A673 (cell line): ENCODE measurements at regions of chr1 and their contacts with region 1.

Region 1: DNA sequence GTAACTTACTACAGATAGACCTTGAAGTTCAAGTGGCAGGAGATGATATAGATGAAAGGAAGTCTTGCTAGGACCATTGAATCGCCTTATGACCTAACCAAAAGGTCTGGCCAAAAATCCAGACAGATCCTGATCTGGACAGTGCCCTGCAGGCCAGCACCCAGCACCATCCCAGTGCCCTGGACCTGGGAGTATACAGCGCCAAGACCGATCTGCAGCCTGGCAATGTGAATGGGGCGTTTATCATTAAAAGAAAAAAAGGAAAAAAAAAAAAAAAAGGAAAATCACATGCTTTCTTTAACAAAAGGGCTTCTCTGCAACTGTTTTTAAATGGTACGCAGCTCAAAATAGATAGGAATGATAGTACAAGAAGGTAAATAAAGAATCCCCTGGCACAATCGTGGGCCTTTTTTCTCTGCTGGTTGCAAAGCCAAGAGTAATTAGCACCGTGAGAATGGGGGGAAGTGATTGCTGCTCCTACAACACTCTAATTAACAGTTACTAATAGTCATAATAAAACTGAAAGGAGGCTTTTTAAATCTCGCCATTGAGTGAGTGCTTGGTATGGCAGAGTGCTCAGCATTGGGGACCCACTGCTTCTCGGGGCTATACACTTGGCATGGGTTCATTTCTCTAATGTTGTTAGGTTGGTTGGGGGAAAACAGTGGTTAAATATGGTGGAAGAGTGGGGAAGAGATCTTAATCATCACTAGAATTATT is 146.7 kb downstream of the KAZN start:
- DNase-seq: no peak
- H3K4me3 ChIP-seq: no peak overlapping the region
- H3K27ac ChIP-seq: no peak overlapping the region
- H3K4me1 ChIP-seq: peaks cover 16% of the 10 kb centered on the region
- H3K27me3 ChIP-seq: no peaks in the 10 kb centered on the region
- CTCF ChIP-seq: no peak

Region 2: GRCh38 chr1:14761291-14762153 is 16.4 kb after region 1 on chr1:
- CTCF ChIA-PET with region 1: interaction called, 10 read pairs
- POLR2A ChIA-PET with region 1: no interaction called
- intact Hi-C with region 1: no loop called
- DNase-seq: no peak
- H3K4me3 ChIP-seq: no peak overlapping the region
- H3K27ac ChIP-seq: no peak overlapping the region
- H3K4me1 ChIP-seq: no peaks in the 10 kb centered on the region
- H3K27me3 ChIP-seq: no peaks in the 10 kb centered on the region
- CTCF ChIP-seq: no peak

Region 3: GRCh38 chr1:14835725-14836124 is 90.6 kb after region 1 on chr1:
- CTCF ChIA-PET with region 1: no interaction called
- POLR2A ChIA-PET with region 1: no interaction called
- intact Hi-C with region 1: no loop called
- DNase-seq: no peak
- H3K4me3 ChIP-seq: no peak overlapping the region
- H3K27ac ChIP-seq: no peak overlapping the region
- H3K4me1 ChIP-seq: no peaks in the 10 kb centered on the region
- H3K27me3 ChIP-seq: no peaks in the 10 kb centered on the region
- CTCF ChIP-seq: no peak